ENCODE measurements at regions of chr10 and their contacts with region 1.

Region 1: GRCh38 chr10:4775808-4776207 is 50.2 kb upstream of the AKR1E2 start:
- DNase-seq: peak; percentile 94
- H3K4me3 ChIP-seq: no peak overlapping the region
- H3K27ac ChIP-seq: peak overlapping the region; percentile 83
- H3K4me1 ChIP-seq: peaks cover 36% of the 10 kb centered on the region
- H3K27me3 ChIP-seq: no peaks in the 10 kb centered on the region
- CTCF ChIP-seq: no peak

Region 2: GRCh38 chr10:3222065-3222464 is 1553.7 kb before region 1 on chr10:
- CTCF ChIA-PET with region 1: no interaction called
- dilution Hi-C with region 1: loop called (anchors 25 kb)
- in situ Hi-C with region 1: loop called (anchors 25 kb)
- intact Hi-C with region 1: no loop called
- DNase-seq: no peak
- H3K4me3 ChIP-seq: no peak overlapping the region
- H3K27ac ChIP-seq: no peak overlapping the region
- H3K4me1 ChIP-seq: peaks cover 21% of the 10 kb centered on the region
- H3K27me3 ChIP-seq: no peaks in the 10 kb centered on the region
- CTCF ChIP-seq: no peak

Region 3: DNA sequence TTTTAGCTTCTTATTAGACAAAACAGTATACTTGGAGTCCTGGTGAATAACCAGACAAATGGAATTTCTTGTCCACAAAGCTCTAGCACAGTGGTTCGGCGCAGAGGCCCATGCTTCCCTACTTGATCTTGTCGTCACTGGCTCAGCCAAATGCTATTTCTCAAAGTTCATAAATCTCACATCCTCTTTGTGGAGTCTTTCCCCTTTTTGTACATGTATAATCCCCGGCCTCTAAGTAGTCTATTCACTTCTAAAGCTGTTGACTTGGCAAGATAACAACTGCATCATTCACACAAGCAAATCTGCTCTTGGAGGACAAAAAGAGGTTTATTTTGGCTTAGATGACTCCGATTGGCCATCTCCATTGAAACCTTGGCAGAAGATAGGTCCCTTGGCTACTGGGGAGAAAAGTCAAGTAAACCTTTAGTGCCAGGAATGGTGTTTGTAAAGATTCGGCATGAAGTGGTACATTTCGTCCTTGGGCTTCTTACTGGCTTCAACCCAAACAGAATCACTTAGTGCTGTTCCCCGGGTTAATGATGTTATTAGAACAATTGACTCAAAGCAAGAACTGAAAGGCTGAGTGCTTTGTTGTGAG is 45.1 kb after region 1 on chr10:
- CTCF ChIA-PET with region 1: no interaction called
- dilution Hi-C with region 1: no loop called
- in situ Hi-C with region 1: no loop called
- intact Hi-C with region 1: no loop called
- DNase-seq: no peak
- H3K4me3 ChIP-seq: no peak overlapping the region
- H3K27ac ChIP-seq: no peak overlapping the region
- H3K4me1 ChIP-seq: no peaks in the 10 kb centered on the region
- H3K27me3 ChIP-seq: no peaks in the 10 kb centered on the region
- CTCF ChIP-seq: no peak

Measured in mammary epithelial cell (primary cell).